B cell (primary cell): ENCODE measurements at regions of chr7 and their contacts with region 1.

Region 1: GRCh38 chr7:90708841-90709317 is 112.8 kb downstream of the CDK14 start:
- DNase-seq: peak; percentile 84
- ATAC-seq: peak; percentile 53
- H3K4me3 ChIP-seq: peak overlapping the region; percentile 46 to 80 (median 59)
- H3K4me3 Mint-ChIP-seq: peak overlapping the region; percentile 88
- H3K27ac ChIP-seq: peak overlapping the region; percentile 72 to 83
- H3K27ac Mint-ChIP-seq: peak overlapping the region; percentile 90
- H3K4me1 ChIP-seq: peaks cover 59 to 66% of the 10 kb centered on the region in 2 donors
- H3K4me1 Mint-ChIP-seq: peaks cover 73% of the 10 kb centered on the region
- H3K27me3 ChIP-seq: no peaks in the 10 kb centered on the region
- H3K27me3 Mint-ChIP-seq: no peaks in the 10 kb centered on the region
- CTCF ChIP-seq: peak; percentile 86

Region 2: DNA sequence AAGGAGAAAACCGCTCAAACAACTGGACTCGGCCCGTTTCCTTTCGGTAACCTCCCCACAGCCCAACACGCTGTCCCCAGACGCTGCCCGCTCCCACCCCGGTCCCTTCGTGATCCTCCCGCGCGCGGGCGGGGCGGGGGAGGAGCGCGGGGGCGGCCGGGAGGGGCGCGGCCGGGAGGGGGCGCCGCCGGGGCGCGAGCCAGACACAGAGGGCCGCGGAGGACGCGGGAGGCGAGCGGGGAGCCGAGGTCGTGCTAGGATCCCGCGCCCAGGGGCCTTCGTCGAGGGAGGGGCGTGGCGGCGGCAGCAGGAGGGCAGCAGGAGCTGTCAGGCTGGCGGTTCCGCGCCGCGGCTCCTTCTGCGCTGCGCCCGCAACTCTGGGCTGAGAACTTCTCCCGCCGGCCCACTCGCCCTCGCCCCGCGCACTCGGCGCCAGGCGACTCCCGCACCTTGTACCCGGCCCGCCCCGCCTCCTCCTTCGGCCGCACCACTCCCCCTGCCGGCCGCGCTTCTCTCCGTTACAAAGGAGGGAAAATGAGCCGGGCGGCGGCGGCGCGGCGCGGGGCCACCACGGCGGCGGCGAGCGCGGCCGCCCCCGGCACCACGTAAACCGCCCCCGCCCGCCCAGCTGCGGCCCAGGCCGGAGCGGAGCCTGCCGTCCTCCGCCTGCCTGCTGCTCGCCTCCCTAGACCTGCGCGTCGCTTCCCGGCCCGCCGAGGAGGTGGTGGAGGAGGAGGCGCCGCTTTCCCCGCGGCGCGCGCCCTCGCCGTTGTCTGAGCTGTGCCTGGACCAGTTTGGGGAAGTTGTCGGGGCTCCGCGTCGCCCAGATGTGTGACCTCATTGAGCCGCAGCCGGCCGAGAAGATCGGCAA is 112.8 kb before region 1 on chr7 and contains the start of gene CDK14:
- CTCF ChIA-PET with region 1: interaction called, 3 read pairs
- POLR2A ChIA-PET with region 1: interaction called, 3 read pairs
- intact Hi-C with region 1: loop called (anchors 1 kb)
- DNase-seq: peak; percentile 93
- ATAC-seq: peak; percentile 68
- H3K4me3 ChIP-seq: peak within 1 kb of the TSS; percentile 72 to 91 (median 84)
- H3K4me3 Mint-ChIP-seq: peak within 1 kb of the TSS; percentile 100
- H3K27ac ChIP-seq: peak within 1 kb of the TSS; percentile 79 to 93
- H3K27ac Mint-ChIP-seq: peak within 1 kb of the TSS; percentile 99
- H3K4me1 ChIP-seq: peaks cover 40 to 45% of the 10 kb centered on the region in 2 donors
- H3K4me1 Mint-ChIP-seq: peaks cover 58% of the 10 kb centered on the region
- H3K27me3 ChIP-seq: no peaks in the 10 kb centered on the region
- H3K27me3 Mint-ChIP-seq: no peaks in the 10 kb centered on the region
- CTCF ChIP-seq: peak; percentile 71
- total RNA-seq, gene CDK14: 167 and 174 TPM in 2 replicates

Region 3: DNA sequence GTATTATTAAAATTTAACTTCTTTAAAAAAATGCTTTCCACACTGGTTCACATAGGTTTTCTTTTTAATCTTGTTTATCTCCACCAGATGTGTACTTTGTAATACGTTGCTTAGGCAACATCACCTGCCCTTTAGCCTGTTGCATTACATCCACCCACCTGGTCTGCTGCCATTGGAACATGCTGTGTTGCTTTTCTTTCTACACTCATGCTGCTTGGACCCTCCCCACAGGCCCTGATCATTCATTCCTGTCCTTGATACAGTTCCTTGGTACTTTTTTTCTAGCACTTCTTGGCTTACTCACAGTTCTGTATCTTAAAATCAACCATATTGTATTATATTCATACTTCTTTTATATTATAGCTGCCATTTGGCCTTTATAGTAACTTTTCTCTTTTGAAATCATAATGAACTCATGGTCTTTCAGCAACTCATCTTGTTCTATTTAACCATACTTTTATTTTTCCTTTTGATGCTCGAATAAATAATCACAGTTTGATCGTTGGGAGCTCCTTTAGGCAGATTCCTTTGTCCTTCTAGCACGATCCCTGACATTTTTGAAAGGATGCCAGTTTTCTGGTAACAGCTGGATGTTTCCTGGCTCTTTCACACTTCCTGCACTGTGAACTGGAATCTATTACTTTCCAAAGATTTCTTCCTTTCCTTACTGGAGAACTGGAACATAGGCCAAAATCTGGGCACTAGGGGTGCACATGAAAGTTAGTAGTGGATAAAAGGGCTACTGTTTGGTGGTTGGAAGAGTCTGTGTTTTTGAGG is 12.3 kb after region 1 on chr7:
- CTCF ChIA-PET with region 1: interaction called, 20 read pairs
- POLR2A ChIA-PET with region 1: interaction called, 7 read pairs
- intact Hi-C with region 1: loop called (anchors 1 kb)
- DNase-seq: no peak
- ATAC-seq: peak; percentile 22
- H3K4me3 ChIP-seq: no peak overlapping the region
- H3K4me3 Mint-ChIP-seq: peak overlapping the region; percentile 10
- H3K27ac ChIP-seq: peak overlapping the region in 1 of 2 donors; percentile 26
- H3K27ac Mint-ChIP-seq: peak overlapping the region; percentile 70
- H3K4me1 ChIP-seq: peaks cover 33 to 67% of the 10 kb centered on the region in 2 donors
- H3K4me1 Mint-ChIP-seq: peaks cover 81% of the 10 kb centered on the region
- H3K27me3 ChIP-seq: no peaks in the 10 kb centered on the region
- H3K27me3 Mint-ChIP-seq: no peaks in the 10 kb centered on the region
- CTCF ChIP-seq: no peak

Region 4: GRCh38 chr7:90736968-90737939 is 28.4 kb after region 1 on chr7:
- CTCF ChIA-PET with region 1: interaction called, 15 read pairs
- POLR2A ChIA-PET with region 1: interaction called, 3 read pairs
- intact Hi-C with region 1: loop called (anchors 1 kb)
- DNase-seq: peak; percentile 89
- ATAC-seq: peak; percentile 87
- H3K4me3 ChIP-seq: peak overlapping the region in 2 of 5 experiments; percentile 10 to 50
- H3K4me3 Mint-ChIP-seq: peak overlapping the region; percentile 66
- H3K27ac ChIP-seq: peak overlapping the region; percentile 86 to 91
- H3K27ac Mint-ChIP-seq: peak overlapping the region; percentile 87
- H3K4me1 ChIP-seq: peaks cover 51 to 57% of the 10 kb centered on the region in 2 donors
- H3K4me1 Mint-ChIP-seq: peaks cover 76% of the 10 kb centered on the region
- H3K27me3 ChIP-seq: no peaks in the 10 kb centered on the region
- H3K27me3 Mint-ChIP-seq: no peaks in the 10 kb centered on the region
- CTCF ChIP-seq: no peak

Region 5: GRCh38 chr7:90816511-90817142 is 107.7 kb after region 1 on chr7:
- CTCF ChIA-PET with region 1: no interaction called
- POLR2A ChIA-PET with region 1: interaction called, 4 read pairs
- intact Hi-C with region 1: loop called (anchors 1 kb)
- DNase-seq: peak; percentile 13
- ATAC-seq: peak; percentile 80
- H3K4me3 ChIP-seq: no peak overlapping the region
- H3K4me3 Mint-ChIP-seq: peak overlapping the region; percentile 35
- H3K27ac ChIP-seq: peak overlapping the region in 1 of 2 donors; percentile 62
- H3K27ac Mint-ChIP-seq: peak overlapping the region; percentile 39
- H3K4me1 ChIP-seq: no peaks in the 10 kb centered on the region
- H3K4me1 Mint-ChIP-seq: peaks cover 27% of the 10 kb centered on the region
- H3K27me3 ChIP-seq: no peaks in the 10 kb centered on the region
- H3K27me3 Mint-ChIP-seq: no peaks in the 10 kb centered on the region
- CTCF ChIP-seq: no peak